Right lobe of liver (tissue), 6 donors: ENCODE measurements at regions of chr12 and their contacts with region 1.

Region 1: DNA sequence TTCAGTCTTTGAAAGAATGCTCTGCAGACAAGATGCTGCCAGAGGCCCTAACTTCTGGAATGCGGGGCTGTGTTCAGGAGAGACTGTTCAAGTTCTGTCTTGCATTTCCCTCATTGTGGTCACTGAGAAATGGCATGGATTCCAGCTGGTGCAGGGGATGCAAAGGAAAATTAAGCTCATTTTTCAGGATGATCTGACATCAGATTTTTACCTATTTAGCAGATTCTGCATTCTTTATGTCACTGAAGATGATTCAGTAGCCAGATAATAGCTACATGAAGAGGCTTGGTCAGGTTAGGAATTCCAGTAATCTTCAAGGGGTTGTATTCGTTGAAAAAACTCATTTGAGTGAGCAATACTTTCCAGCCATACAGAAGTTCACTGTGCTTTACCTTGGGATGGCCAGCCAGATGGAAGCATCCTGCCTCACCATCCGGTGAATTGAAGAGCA is 16.1 kb upstream of the MFAP5 start:
- DNase-seq: no peak
- ATAC-seq: no peak
- H3K4me3 ChIP-seq: no peak overlapping the region
- H3K27ac ChIP-seq: no peak overlapping the region
- H3K4me1 ChIP-seq: no peaks in the 10 kb centered on the region
- H3K27me3 ChIP-seq: no peaks in the 10 kb centered on the region
- CTCF ChIP-seq: no peak
- POLR2A ChIP-seq: no peak

Region 2: DNA sequence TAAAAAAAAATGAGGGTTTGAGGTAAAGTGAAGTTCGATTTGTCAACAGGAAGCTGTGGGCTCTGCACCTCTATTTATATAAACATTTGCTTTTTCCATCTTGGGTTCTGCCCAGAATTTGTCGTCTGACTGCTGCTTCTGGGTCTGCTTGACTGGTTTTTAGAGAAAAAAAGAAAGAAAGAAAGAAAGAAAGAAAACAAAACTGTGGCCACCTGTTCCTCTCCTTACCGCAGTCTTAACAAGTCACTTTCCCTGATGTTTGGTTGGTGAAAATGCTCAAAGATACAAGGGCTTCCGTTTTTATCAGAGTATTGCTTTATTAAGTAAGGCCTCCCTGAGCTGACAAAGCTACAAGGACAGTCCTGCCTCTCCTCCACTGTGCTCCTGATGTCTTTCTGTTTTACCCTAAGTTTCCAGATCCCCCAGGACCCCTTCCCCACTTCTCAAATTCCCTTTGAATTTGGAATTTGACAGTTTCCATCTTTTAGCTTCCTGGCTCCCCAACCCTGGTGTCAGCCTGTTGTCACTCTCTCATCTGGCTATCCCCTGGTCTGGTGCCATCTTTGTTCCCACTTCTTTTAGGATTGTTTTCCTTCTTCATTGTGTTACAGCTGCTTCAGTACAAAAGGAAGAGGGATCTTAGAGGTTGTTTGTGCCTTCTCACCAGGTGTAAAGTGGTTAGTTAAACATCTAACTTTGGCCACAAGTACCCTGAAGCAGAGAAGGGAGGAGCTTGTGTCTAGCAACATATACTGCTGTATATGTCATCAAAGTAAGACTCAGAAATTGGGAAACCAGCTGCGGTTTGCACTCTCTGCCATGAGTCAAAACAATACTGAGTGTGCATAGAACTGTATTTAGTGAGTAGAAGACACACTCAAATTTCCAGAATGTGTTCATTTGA is 34.1 kb before region 1 on chr12:
- intact Hi-C with region 1: no loop called
- DNase-seq: no peak
- ATAC-seq: peak in 1 of 4 donors; percentile 13
- H3K4me3 ChIP-seq: no peak overlapping the region
- H3K27ac ChIP-seq: no peak overlapping the region
- H3K4me1 ChIP-seq: no peaks in the 10 kb centered on the region
- H3K27me3 ChIP-seq: no peaks in the 10 kb centered on the region
- CTCF ChIP-seq: no peak
- POLR2A ChIP-seq: no peak

Region 3: GRCh38 chr12:8734873-8735381 is 56.2 kb after region 1 on chr12:
- intact Hi-C with region 1: no loop called
- DNase-seq: no peak
- ATAC-seq: no peak
- H3K4me3 ChIP-seq: no peak overlapping the region
- H3K27ac ChIP-seq: no peak overlapping the region
- H3K4me1 ChIP-seq: no peaks in the 10 kb centered on the region
- H3K27me3 ChIP-seq: no peaks in the 10 kb centered on the region
- CTCF ChIP-seq: no peak
- POLR2A ChIP-seq: no peak

Region 4: GRCh38 chr12:8887285-8887715 is 208.6 kb after region 1 on chr12:
- intact Hi-C with region 1: loop called in 1 of 2 experiments (anchors 5 kb)
- DNase-seq: no peak
- ATAC-seq: no peak
- H3K4me3 ChIP-seq: no peak overlapping the region
- H3K27ac ChIP-seq: no peak overlapping the region
- H3K4me1 ChIP-seq: no peaks in the 10 kb centered on the region
- H3K27me3 ChIP-seq: no peaks in the 10 kb centered on the region
- CTCF ChIP-seq: no peak
- POLR2A ChIP-seq: no peak